ENCODE measurements at regions of chr5 and their contacts with region 1.

Region 1: DNA sequence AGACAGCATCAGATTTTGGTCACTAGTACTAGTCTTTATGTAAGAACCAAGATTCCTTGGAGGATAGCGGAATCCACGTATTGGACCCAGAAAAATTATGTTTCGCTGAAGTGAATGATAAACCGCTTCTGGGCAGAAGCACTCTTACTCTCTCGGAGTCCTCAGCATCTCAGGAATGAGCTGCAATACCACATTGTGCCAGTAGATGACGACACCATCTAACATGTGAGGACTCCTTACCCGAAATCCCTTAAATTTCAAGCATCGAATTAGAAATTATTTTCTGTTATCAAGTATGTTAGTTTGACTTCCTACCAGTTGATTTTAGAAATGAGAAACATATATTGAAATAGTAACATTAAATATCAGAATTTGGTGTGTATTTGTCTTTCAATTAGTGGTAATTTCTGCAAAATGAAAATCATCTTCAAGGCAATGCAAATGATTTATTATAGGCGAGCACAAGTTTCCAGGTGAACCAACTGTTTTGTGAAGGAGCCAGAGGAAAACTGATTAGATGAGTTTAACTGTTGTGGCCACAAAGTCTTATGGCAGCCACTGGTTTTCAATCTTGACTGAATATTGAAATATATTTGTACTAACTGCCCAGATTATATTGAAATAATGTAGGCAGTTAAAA is 66.0 kb upstream of the CAMK4 start:
- DNase-seq: peak; percentile 93
- H3K4me3 Mint-ChIP-seq: no peak overlapping the region
- H3K27ac Mint-ChIP-seq: no peak overlapping the region
- H3K4me1 Mint-ChIP-seq: peaks cover 7% of the 10 kb centered on the region
- H3K27me3 Mint-ChIP-seq: no peaks in the 10 kb centered on the region

Region 2: GRCh38 chr5:111201705-111202104 is 43.5 kb after region 1 on chr5:
- CTCF ChIA-PET with region 1: interaction called, 3 read pairs
- intact Hi-C with region 1: loop called (anchors 2 kb)
- DNase-seq: no peak
- H3K4me3 Mint-ChIP-seq: no peak overlapping the region
- H3K27ac Mint-ChIP-seq: no peak overlapping the region
- H3K4me1 Mint-ChIP-seq: peaks cover 23% of the 10 kb centered on the region
- H3K27me3 Mint-ChIP-seq: peaks cover 2% of the 10 kb centered on the region

Region 3: DNA sequence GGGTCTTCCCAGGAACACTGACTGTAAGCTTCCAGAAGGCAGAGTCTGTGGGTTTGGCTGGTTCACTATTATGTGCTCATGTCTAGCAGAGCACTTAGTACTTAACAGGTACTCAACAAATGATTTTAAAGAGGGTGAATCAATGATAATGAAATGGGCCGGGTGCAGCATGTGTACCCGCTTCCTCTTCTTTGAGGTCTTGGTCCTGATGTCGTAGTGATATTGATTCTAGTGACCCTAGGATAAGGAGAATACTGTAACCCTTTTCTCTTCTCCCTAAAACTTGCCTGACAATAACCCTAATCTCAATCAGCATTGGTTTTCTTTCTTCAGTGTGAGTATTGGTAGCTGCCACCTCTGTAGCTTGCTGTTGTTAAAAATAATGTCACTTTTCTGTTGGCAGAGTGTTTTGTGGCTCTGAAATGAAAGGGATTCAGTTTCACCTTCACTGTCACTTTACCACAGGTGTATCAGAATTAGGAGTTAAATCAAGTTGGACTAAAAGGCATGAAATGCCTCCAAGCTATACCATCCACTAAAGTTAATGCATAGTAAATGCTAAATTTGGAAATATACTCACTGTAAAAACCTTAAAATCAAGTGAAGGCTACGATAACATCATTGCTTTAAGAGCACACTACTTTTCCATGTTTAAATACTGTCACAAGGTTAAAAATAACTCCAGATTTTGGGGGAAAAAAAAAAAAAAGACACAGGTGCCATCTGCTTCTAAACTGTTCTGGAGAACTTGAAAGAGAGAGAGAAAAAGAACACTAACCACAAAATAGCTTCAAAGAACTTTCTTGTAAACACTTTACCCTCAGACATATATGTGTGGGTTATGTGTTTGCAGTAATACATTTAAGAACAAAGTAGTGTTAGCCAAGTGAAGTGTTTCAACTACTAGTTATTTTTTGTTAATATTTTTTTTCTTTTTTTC is 71.9 kb after region 1 on chr5:
- CTCF ChIA-PET with region 1: interaction called, 40 read pairs
- intact Hi-C with region 1: loop called (anchors 2 kb)
- DNase-seq: peak; percentile 43
- H3K4me3 Mint-ChIP-seq: peak overlapping the region; percentile 68
- H3K27ac Mint-ChIP-seq: peak overlapping the region; percentile 94
- H3K4me1 Mint-ChIP-seq: peaks cover 69% of the 10 kb centered on the region
- H3K27me3 Mint-ChIP-seq: no peaks in the 10 kb centered on the region

Region 4: GRCh38 chr5:111512375-111513130 is 354.3 kb after region 1 on chr5 and contains the start of gene STARD4:
- CTCF ChIA-PET with region 1: no interaction called
- intact Hi-C with region 1: loop called (anchors 1 kb)
- DNase-seq: peak; percentile 95
- H3K4me3 Mint-ChIP-seq: peak within 1 kb of the TSS; percentile 93
- H3K27ac Mint-ChIP-seq: peak within 1 kb of the TSS; percentile 94
- H3K4me1 Mint-ChIP-seq: peaks cover 37% of the 10 kb centered on the region
- H3K27me3 Mint-ChIP-seq: no peaks in the 10 kb centered on the region
- total RNA-seq, gene STARD4: 45.0 to 47.1 TPM

Region 5: DNA sequence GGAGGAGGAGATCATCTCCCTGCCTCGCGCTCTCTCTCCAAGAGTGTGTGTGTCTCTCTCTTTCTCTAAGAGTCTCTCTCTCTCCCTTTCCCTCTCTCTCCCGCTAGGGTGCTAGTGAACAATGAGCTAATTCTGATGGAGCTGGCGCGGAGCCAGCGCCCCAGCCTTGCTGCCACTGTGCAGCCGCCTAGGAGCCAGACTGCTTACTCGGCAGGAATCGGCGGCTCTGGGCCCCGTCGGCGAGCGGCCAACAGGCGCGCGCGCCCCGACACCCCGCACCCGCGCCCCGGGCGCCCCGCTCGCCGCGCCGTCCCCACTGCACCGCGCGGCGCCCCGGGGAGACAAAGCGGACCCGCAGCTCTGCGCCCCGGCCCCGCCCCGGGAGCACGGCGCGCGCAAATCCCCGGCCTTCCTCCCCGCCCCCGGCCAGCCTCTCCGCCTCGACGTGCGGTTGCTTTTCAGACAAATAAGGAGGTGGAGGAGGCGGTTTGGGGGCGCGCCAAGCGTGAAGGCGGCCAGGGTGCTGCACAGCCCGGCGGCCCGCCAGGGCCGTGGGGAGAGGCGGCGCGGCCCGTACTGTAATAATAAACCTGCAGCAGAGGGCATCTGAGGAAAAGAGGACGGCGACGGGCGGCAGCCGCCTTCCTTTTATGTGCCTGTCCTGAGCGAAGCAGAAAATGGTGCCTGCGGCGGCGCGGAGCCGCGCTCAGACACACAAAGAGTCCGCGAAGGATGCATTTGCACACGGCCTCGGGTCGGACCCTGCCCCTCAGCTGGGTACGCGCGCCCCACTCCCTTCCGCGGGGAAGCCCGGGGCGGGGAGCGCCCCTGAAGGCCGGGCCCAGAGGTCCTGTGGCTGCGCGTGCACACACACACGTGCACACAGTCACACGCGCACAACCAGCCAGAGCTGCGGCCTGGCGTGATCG is 599.4 kb after region 1 on chr5:
- CTCF ChIA-PET with region 1: no interaction called
- intact Hi-C with region 1: loop called (anchors 10 kb)
- DNase-seq: peak; percentile 83
- H3K4me3 Mint-ChIP-seq: peak overlapping the region; percentile 85
- H3K27ac Mint-ChIP-seq: peak overlapping the region; percentile 77
- H3K4me1 Mint-ChIP-seq: peaks cover 16% of the 10 kb centered on the region
- H3K27me3 Mint-ChIP-seq: no peaks in the 10 kb centered on the region

Measured in activated naive CD4-positive, alpha-beta T cell treated with anti-CD3 and anti-CD28 coated beads for 36 hours (primary cell).